ENCODE measurements at regions of chr1 and their contacts with region 1.

Region 1: DNA sequence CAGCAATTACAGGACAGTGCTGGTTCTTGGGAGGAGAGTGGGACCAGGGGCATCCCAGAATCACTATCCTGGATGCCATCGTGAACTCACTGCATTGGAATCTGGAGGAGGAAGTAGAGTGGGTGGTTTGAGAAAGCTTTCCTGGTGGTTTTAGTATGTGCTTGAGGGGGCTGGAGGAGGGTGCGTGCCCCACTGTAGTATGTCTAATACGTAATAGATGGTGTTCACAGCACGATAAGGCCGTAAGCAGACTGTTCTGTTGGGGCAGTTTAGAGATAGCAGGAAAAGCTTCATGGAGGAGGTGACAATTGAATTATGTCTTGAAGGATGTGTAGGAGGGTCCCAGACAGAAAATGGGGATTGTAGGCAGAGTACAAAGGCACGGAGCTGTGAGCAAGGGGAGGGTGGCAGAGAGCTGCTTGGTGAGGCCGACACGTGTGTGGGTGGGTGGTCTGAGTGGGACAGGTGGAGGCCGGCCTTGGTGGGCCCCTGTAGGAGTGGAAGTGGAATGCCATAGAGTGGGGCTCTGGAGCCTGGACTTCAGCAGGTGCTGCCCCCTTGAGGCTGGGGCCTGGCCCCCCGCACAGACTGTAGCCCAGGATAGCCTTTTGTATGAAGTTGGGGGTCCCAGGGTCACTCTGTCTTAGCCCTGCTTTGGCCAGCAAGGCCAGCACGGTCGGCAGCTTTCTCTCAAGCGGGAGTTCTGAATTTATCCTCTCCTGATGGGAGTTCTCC is 37.0 kb downstream of the IL6R start:
- DNase-seq: peak; percentile 37
- ATAC-seq: no peak
- H3K4me3 Mint-ChIP-seq: no peak overlapping the region
- H3K27ac Mint-ChIP-seq: peak overlapping the region; percentile 63
- H3K4me1 Mint-ChIP-seq: peaks cover 72% of the 10 kb centered on the region
- H3K27me3 Mint-ChIP-seq: no peaks in the 10 kb centered on the region

Region 2: DNA sequence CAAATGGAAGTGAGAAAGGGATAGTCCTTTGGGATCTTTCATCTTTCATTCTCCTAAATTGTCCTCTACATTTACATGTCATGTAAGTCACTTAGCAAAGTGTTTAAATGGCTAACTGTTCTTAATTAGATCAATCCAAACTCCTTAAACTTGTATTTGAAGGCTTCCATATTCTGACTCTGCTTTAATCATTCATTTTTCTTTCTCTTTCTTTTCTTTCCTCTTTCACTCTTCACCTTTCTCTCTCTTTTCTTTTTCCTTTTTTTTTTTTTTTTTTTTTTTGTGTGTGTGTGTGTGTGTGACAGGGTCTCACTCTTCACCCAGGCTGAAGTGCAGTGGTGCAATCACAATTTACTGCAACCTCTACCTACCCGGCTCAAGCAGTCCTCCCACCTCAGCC is 379.9 kb before region 1 on chr1:
- CTCF ChIA-PET with region 1: no interaction called
- POLR2A ChIA-PET with region 1: no interaction called
- intact Hi-C with region 1: no loop called
- DNase-seq: no peak
- ATAC-seq: no peak
- H3K4me3 Mint-ChIP-seq: no peak overlapping the region
- H3K27ac Mint-ChIP-seq: no peak overlapping the region
- H3K4me1 Mint-ChIP-seq: no peaks in the 10 kb centered on the region
- H3K27me3 Mint-ChIP-seq: peaks cover 4% of the 10 kb centered on the region

Region 3: GRCh38 chr1:154324669-154325582 is 117.2 kb before region 1 on chr1 and contains the start of gene ATP8B2:
- CTCF ChIA-PET with region 1: interaction called, 3 read pairs
- POLR2A ChIA-PET with region 1: no interaction called
- intact Hi-C with region 1: loop called in 1 of 2 experiments (anchors 1 kb)
- DNase-seq: peak; percentile 92
- ATAC-seq: peak; percentile 70
- H3K4me3 Mint-ChIP-seq: peak within 1 kb of the TSS; percentile 99
- H3K27ac Mint-ChIP-seq: peak within 1 kb of the TSS; percentile 94
- H3K4me1 Mint-ChIP-seq: peaks cover 39% of the 10 kb centered on the region
- H3K27me3 Mint-ChIP-seq: no peaks in the 10 kb centered on the region
- total RNA-seq, gene ATP8B2: 48.2 TPM

Region 4: GRCh38 chr1:154431586-154432373 is 10.4 kb before region 1 on chr1:
- CTCF ChIA-PET with region 1: interaction called, 5 read pairs
- POLR2A ChIA-PET with region 1: no interaction called
- intact Hi-C with region 1: loop called in 1 of 2 experiments (anchors 1 kb)
- DNase-seq: peak; percentile 76
- ATAC-seq: peak; percentile 83
- H3K4me3 Mint-ChIP-seq: no peak overlapping the region
- H3K27ac Mint-ChIP-seq: peak overlapping the region; percentile 58
- H3K4me1 Mint-ChIP-seq: peaks cover 56% of the 10 kb centered on the region
- H3K27me3 Mint-ChIP-seq: no peaks in the 10 kb centered on the region

Region 5: DNA sequence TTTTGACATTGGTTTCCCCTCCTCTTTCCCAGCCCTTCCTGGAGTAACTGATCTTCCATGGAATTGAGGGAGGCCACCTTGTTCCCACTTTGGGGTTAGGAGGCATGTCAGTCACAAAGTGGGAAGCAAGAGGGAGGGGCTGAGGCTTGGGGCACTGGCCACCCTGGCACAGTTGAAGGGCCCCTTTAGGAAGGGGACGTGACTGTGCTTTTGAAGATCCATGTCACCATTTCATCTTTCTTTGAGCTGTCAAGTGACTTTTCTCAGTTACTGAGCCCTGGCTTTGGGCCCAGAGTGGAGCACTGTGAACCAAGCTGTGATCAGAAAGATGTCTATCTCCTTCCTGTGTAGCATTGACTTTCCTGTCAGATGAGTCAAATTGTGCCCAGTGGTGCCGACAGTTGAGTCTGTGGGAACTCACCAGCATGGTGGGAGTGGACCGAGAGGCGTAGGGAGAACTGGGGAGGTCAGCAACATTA is 21.4 kb after region 1 on chr1:
- CTCF ChIA-PET with region 1: interaction called, 6 read pairs
- POLR2A ChIA-PET with region 1: interaction called, 7 read pairs
- intact Hi-C with region 1: loop called (anchors 1 to 2 kb)
- DNase-seq: peak; percentile 86
- ATAC-seq: peak; percentile 87
- H3K4me3 Mint-ChIP-seq: peak overlapping the region; percentile 34
- H3K27ac Mint-ChIP-seq: peak overlapping the region; percentile 76
- H3K4me1 Mint-ChIP-seq: peaks cover 83% of the 10 kb centered on the region
- H3K27me3 Mint-ChIP-seq: no peaks in the 10 kb centered on the region

Region 6: GRCh38 chr1:154493276-154493675 is 51.1 kb after region 1 on chr1:
- CTCF ChIA-PET with region 1: no interaction called
- POLR2A ChIA-PET with region 1: interaction called, 12 read pairs
- intact Hi-C with region 1: no loop called
- DNase-seq: no peak
- ATAC-seq: no peak
- H3K4me3 Mint-ChIP-seq: no peak overlapping the region
- H3K27ac Mint-ChIP-seq: no peak overlapping the region
- H3K4me1 Mint-ChIP-seq: peaks cover 41% of the 10 kb centered on the region
- H3K27me3 Mint-ChIP-seq: peaks cover 4% of the 10 kb centered on the region